B cell (primary cell): ENCODE measurements at regions of chr18 and their contacts with region 1.

Region 1: DNA sequence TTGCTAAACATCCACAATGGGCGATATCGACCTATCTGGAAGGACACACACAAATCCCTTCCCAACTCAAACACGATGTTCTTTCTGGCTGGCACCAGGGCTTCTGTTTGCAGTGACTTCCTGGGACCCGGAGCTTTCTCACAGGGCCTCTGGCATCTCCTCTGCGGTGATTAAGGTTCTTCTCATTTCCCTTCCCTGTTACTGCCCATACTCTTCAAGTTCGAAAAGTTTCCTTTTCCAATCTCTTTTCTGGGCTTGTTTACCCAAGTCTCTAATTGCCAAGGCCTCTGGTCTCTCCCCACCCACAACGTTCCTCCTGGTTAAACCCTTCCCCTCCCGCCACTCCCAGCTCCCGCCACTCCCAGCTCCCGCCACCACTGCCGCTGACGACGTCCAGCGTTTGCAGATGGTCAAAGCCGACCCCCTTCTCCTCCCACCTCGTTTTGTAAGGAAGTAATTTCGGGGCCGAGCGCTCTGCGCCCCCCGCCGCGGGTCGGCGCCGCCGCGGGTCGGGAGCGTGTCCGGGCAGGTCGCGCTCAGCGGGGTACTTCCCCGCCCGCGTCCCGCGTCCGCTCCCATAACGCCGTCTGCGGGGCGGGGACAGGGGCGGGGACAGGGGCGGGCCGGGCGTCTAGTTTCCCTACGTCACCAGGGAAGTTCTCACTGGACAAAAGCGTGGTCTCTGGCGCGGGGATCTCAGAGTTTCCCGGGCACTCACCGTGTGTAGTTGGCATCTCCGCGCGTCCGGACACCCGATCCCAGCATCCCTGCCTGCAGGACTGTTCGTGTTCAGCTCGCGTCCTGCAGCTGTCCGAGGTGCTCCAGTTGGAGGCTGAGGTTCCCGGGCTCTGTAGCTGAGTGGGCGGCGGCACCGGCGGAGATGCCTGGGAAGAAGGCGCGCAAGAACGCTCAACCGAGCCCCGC is at the start of gene PMAIP1:
- DNase-seq: peak; percentile 92
- ATAC-seq: peak; percentile 82
- H3K4me3 ChIP-seq: peak within 1 kb of the TSS; percentile 83 to 96 (median 95)
- H3K4me3 Mint-ChIP-seq: peak within 1 kb of the TSS; percentile 98
- H3K27ac ChIP-seq: peak within 1 kb of the TSS; percentile 92 to 95
- H3K27ac Mint-ChIP-seq: peak within 1 kb of the TSS; percentile 97
- H3K4me1 ChIP-seq: peaks cover 26 to 35% of the 10 kb centered on the region in 2 donors
- H3K4me1 Mint-ChIP-seq: peaks cover 44% of the 10 kb centered on the region
- H3K27me3 ChIP-seq: no peaks in the 10 kb centered on the region
- H3K27me3 Mint-ChIP-seq: no peaks in the 10 kb centered on the region
- CTCF ChIP-seq: no peak
- total RNA-seq, gene PMAIP1: 67.2 and 69.6 TPM in 2 replicates

Region 2: GRCh38 chr18:59837586-59837985 is 62.0 kb before region 1 on chr18:
- CTCF ChIA-PET with region 1: interaction called, 28 read pairs
- POLR2A ChIA-PET with region 1: interaction called, 5 read pairs
- intact Hi-C with region 1: loop called (anchors 1 kb)
- DNase-seq: peak; percentile 81
- ATAC-seq: peak; percentile 72
- H3K4me3 ChIP-seq: no peak overlapping the region
- H3K4me3 Mint-ChIP-seq: no peak overlapping the region
- H3K27ac ChIP-seq: no peak overlapping the region
- H3K27ac Mint-ChIP-seq: no peak overlapping the region
- H3K4me1 ChIP-seq: peaks cover 5 to 19% of the 10 kb centered on the region in 2 donors
- H3K4me1 Mint-ChIP-seq: peaks cover 24% of the 10 kb centered on the region
- H3K27me3 ChIP-seq: no peaks in the 10 kb centered on the region
- H3K27me3 Mint-ChIP-seq: no peaks in the 10 kb centered on the region
- CTCF ChIP-seq: peak; percentile 93

Region 3: DNA sequence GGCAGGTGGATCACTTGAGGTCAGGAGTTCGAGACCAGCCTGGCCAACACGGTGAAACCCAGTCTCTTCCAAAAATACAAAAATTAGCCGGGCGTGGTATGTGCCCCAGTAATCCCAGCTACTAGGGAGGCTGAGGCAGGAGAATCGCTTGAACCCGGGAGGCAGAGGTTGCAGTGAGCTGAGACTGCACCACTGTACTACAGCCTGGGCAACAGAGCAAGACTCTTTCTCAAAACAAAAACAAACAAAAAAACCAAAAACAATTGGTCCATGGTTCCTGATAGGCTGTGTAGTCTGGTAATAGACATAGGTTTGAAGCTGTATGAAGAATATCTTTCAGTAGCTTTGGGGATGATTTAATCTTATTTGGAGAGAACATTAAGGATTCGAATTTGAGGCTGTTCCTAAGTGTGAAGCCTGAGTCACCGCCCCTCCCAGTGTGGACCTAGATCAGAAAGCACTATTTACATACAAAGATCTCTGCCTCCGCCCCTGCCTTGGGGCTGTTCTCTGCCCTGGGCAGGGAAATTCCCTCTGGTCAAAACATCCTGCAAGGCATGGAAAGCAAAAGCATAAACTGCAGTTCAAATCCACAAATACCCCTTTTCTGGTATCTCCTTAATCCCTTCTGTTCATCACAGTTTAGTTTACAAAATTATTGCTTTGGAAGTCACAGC is 52.6 kb before region 1 on chr18:
- CTCF ChIA-PET with region 1: interaction called, 7 read pairs
- POLR2A ChIA-PET with region 1: interaction called, 4 read pairs
- intact Hi-C with region 1: loop called (anchors 1 kb)
- DNase-seq: peak; percentile 71
- ATAC-seq: peak; percentile 82
- H3K4me3 ChIP-seq: no peak overlapping the region
- H3K4me3 Mint-ChIP-seq: peak overlapping the region; percentile 46
- H3K27ac ChIP-seq: no peak overlapping the region
- H3K27ac Mint-ChIP-seq: peak overlapping the region; percentile 74
- H3K4me1 ChIP-seq: peaks cover 26 to 37% of the 10 kb centered on the region in 2 donors
- H3K4me1 Mint-ChIP-seq: peaks cover 33% of the 10 kb centered on the region
- H3K27me3 ChIP-seq: no peaks in the 10 kb centered on the region
- H3K27me3 Mint-ChIP-seq: no peaks in the 10 kb centered on the region
- CTCF ChIP-seq: no peak

Region 4: DNA sequence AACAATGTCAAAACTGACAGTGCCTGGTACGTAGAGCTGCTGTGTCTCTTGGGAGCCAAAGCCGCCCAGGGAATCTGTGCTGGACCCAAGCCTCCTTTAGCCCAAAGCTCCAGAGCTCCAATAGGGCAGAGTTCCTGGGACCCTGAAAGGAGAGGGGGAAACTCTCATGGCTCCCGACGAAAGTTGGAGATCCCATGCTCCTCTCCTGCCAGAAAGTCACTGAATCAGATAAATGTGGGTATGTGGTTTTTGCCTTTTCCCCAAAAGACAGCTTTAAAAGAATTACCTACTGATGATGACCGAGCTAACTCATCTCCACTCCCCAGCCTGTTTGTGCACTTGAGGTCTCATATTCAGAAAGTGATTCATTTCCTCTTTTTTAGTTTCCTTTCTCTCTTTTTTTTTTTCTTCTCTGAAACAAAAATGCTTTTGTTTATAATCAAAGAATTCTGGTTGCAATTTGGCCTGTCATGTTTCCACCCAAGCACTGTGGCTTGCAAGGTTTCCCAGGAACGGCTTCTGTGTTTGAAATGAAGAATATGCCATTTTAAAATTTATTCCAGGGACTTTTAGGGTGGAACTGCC is 13.9 kb before region 1 on chr18:
- CTCF ChIA-PET with region 1: interaction called, 12 read pairs
- POLR2A ChIA-PET with region 1: interaction called, 23 read pairs
- intact Hi-C with region 1: loop called (anchors 1 kb)
- DNase-seq: peak; percentile 75
- ATAC-seq: peak; percentile 78
- H3K4me3 ChIP-seq: peak overlapping the region in 2 of 5 experiments; percentile 32 to 44
- H3K4me3 Mint-ChIP-seq: peak overlapping the region; percentile 60
- H3K27ac ChIP-seq: peak overlapping the region; percentile 65 to 68
- H3K27ac Mint-ChIP-seq: peak overlapping the region; percentile 84
- H3K4me1 ChIP-seq: peaks cover 36 to 42% of the 10 kb centered on the region in 2 donors
- H3K4me1 Mint-ChIP-seq: peaks cover 52% of the 10 kb centered on the region
- H3K27me3 ChIP-seq: no peaks in the 10 kb centered on the region
- H3K27me3 Mint-ChIP-seq: no peaks in the 10 kb centered on the region
- CTCF ChIP-seq: no peak

Region 5: DNA sequence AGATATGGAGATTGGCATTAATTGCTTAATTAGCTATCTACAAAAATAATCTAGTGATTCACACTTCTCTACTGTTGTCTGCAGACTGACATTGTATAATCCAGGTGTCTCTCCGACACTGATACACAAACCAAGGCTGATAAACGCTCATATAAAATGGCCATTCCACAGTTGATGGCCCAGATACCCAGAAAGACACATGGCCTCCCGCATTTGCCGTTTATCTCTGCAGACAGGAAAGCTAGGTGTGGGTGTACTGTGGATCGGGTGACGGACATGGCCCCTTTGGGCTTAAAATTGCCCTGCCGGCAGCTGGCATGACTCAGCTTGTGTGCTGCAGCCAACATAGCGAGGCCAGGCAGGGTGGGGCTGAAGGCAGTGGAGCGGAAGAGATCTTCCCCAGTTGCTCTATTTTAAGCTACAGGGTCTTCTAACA is 18.8 kb after region 1 on chr18:
- CTCF ChIA-PET with region 1: interaction called, 9 read pairs
- POLR2A ChIA-PET with region 1: interaction called, 5 read pairs
- intact Hi-C with region 1: loop called (anchors 1 kb)
- DNase-seq: peak; percentile 54
- ATAC-seq: peak; percentile 82
- H3K4me3 ChIP-seq: peak overlapping the region in 4 of 5 experiments; percentile 15 to 43 (median 34)
- H3K4me3 Mint-ChIP-seq: peak overlapping the region; percentile 74
- H3K27ac ChIP-seq: no peak overlapping the region
- H3K27ac Mint-ChIP-seq: peak overlapping the region; percentile 68
- H3K4me1 ChIP-seq: peaks cover 28 to 39% of the 10 kb centered on the region in 2 donors
- H3K4me1 Mint-ChIP-seq: peaks cover 35% of the 10 kb centered on the region
- H3K27me3 ChIP-seq: no peaks in the 10 kb centered on the region
- H3K27me3 Mint-ChIP-seq: no peaks in the 10 kb centered on the region
- CTCF ChIP-seq: no peak

Region 6: GRCh38 chr18:59954746-59955145 is 55.2 kb after region 1 on chr18:
- CTCF ChIA-PET with region 1: interaction called, 8 read pairs
- POLR2A ChIA-PET with region 1: interaction called, 24 read pairs
- intact Hi-C with region 1: loop called (anchors 2 kb)
- DNase-seq: no peak
- ATAC-seq: no peak
- H3K4me3 ChIP-seq: no peak overlapping the region
- H3K4me3 Mint-ChIP-seq: no peak overlapping the region
- H3K27ac ChIP-seq: no peak overlapping the region
- H3K27ac Mint-ChIP-seq: no peak overlapping the region
- H3K4me1 ChIP-seq: peaks cover 14 to 19% of the 10 kb centered on the region in 2 donors
- H3K4me1 Mint-ChIP-seq: peaks cover 43% of the 10 kb centered on the region
- H3K27me3 ChIP-seq: no peaks in the 10 kb centered on the region
- H3K27me3 Mint-ChIP-seq: no peaks in the 10 kb centered on the region
- CTCF ChIP-seq: no peak

Region 7: GRCh38 chr18:59961086-59961485 is 61.5 kb after region 1 on chr18:
- CTCF ChIA-PET with region 1: interaction called, 9 read pairs
- POLR2A ChIA-PET with region 1: interaction called, 24 read pairs
- intact Hi-C with region 1: loop called (anchors 2 kb)
- DNase-seq: peak; percentile 73
- ATAC-seq: peak; percentile 89
- H3K4me3 ChIP-seq: peak overlapping the region in 1 of 5 experiments; percentile 32
- H3K4me3 Mint-ChIP-seq: peak overlapping the region; percentile 68
- H3K27ac ChIP-seq: peak overlapping the region; percentile 50 to 61
- H3K27ac Mint-ChIP-seq: peak overlapping the region; percentile 90
- H3K4me1 ChIP-seq: peaks cover 40 to 44% of the 10 kb centered on the region in 2 donors
- H3K4me1 Mint-ChIP-seq: peaks cover 44% of the 10 kb centered on the region
- H3K27me3 ChIP-seq: no peaks in the 10 kb centered on the region
- H3K27me3 Mint-ChIP-seq: no peaks in the 10 kb centered on the region
- CTCF ChIP-seq: no peak